ENCODE measurements at regions of chr14 and their contacts with region 1.

Region 1: DNA sequence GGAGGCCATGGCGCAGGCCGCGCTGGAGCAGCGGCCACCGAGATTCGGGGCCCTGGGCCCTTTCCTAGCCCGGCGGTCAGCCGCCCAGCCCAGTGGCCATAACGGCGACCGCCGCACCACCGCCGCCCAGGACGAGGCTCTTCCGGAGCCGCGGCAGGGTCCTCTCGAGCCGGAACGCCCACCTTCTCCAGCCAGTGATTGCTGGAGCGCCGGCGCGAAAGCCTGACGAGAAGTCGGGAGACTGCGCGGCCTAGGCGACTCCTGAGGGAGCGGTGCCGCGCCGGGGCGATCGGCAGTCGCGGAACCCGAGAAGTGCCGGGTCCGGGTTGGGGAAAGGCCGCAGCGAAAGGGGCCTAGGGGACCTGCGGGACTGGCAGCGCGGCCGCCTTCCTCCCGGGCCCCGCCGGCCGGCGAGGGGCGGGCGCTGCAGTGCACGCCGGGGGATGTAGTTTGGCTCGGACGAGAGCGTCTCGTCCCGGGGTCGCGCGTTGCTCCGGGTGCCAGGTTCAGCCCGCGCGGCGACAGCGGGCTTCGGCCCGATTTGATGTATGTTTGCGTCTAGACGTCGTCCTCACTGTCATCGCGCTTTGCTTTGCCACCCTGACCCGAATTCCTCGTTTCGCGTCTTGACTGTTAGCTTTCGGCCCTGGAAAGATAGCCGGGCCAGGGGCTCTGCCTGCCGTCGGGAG is at the start of gene VTI1B:
- DNase-seq: peak; percentile 79
- ATAC-seq: peak; percentile 96
- H3K4me3 Mint-ChIP-seq: peak within 1 kb of the TSS; percentile 83
- H3K27ac Mint-ChIP-seq: peak within 1 kb of the TSS; percentile 84
- H3K4me1 Mint-ChIP-seq: peaks cover 22% of the 10 kb centered on the region
- H3K27me3 Mint-ChIP-seq: no peaks in the 10 kb centered on the region
- CTCF ChIP-seq: no peak
- total RNA-seq, gene VTI1B: 57.3 to 59.7 TPM

Region 2: GRCh38 chr14:67610491-67610890 is 64.1 kb before region 1 on chr14:
- CTCF ChIA-PET with region 1: no interaction called
- POLR2A ChIA-PET with region 1: no interaction called
- intact Hi-C with region 1: no loop called
- DNase-seq: peak; percentile 54
- ATAC-seq: peak; percentile 98
- H3K4me3 Mint-ChIP-seq: no peak overlapping the region
- H3K27ac Mint-ChIP-seq: no peak overlapping the region
- H3K4me1 Mint-ChIP-seq: peaks cover 9% of the 10 kb centered on the region
- H3K27me3 Mint-ChIP-seq: peaks cover 3% of the 10 kb centered on the region
- CTCF ChIP-seq: no peak

Region 3: GRCh38 chr14:67636361-67636919 is 38.2 kb before region 1 on chr14:
- CTCF ChIA-PET with region 1: no interaction called
- POLR2A ChIA-PET with region 1: no interaction called
- intact Hi-C with region 1: no loop called
- DNase-seq: peak; percentile 17
- ATAC-seq: peak; percentile 84
- H3K4me3 Mint-ChIP-seq: no peak overlapping the region
- H3K27ac Mint-ChIP-seq: no peak overlapping the region
- H3K4me1 Mint-ChIP-seq: no peaks in the 10 kb centered on the region
- H3K27me3 Mint-ChIP-seq: no peaks in the 10 kb centered on the region
- CTCF ChIP-seq: no peak

Region 4: GRCh38 chr14:67695394-67695949 is 20.8 kb after region 1 on chr14 and contains the start of gene RDH11:
- CTCF ChIA-PET with region 1: interaction called, 4 read pairs
- POLR2A ChIA-PET with region 1: interaction called, 30 read pairs
- intact Hi-C with region 1: no loop called
- DNase-seq: peak; percentile 90
- ATAC-seq: peak; percentile 89
- H3K4me3 Mint-ChIP-seq: peak within 1 kb of the TSS; percentile 85
- H3K27ac Mint-ChIP-seq: peak within 1 kb of the TSS; percentile 95
- H3K4me1 Mint-ChIP-seq: peaks cover 24% of the 10 kb centered on the region
- H3K27me3 Mint-ChIP-seq: no peaks in the 10 kb centered on the region
- CTCF ChIP-seq: no peak
- total RNA-seq, gene RDH11: 78.9 to 83.2 TPM

Region 5: GRCh38 chr14:67749341-67750084 is 74.9 kb after region 1 on chr14:
- CTCF ChIA-PET with region 1: no interaction called
- POLR2A ChIA-PET with region 1: no interaction called
- intact Hi-C with region 1: no loop called
- DNase-seq: no peak
- ATAC-seq: no peak
- H3K4me3 Mint-ChIP-seq: no peak overlapping the region
- H3K27ac Mint-ChIP-seq: no peak overlapping the region
- H3K4me1 Mint-ChIP-seq: peaks cover 11% of the 10 kb centered on the region
- H3K27me3 Mint-ChIP-seq: no peaks in the 10 kb centered on the region
- CTCF ChIP-seq: no peak